Activated CD4-positive, alpha-beta memory T cell treated with anti-CD3 and anti-CD28 coated beads for 36 hours (primary cell): ENCODE measurements at regions of chr4 and their contacts with region 1.

Region 1: GRCh38 chr4:47668810-47669408 is 169.0 kb downstream of the CORIN start:
- DNase-seq: no peak
- H3K4me3 Mint-ChIP-seq: no peak overlapping the region
- H3K27ac Mint-ChIP-seq: no peak overlapping the region
- H3K4me1 Mint-ChIP-seq: no peaks in the 10 kb centered on the region
- H3K27me3 Mint-ChIP-seq: peaks cover 4% of the 10 kb centered on the region

Region 2: GRCh38 chr4:47686294-47686872 is 17.5 kb after region 1 on chr4:
- CTCF ChIA-PET with region 1: interaction called, 28 read pairs
- POLR2A ChIA-PET with region 1: no interaction called
- intact Hi-C with region 1: no loop called
- DNase-seq: peak; percentile 81
- H3K4me3 Mint-ChIP-seq: no peak overlapping the region
- H3K27ac Mint-ChIP-seq: no peak overlapping the region
- H3K4me1 Mint-ChIP-seq: peaks cover 2% of the 10 kb centered on the region
- H3K27me3 Mint-ChIP-seq: peaks cover 8% of the 10 kb centered on the region